ENCODE measurements at regions of chr9 and their contacts with region 1.

Region 1: GRCh38 chr9:34985311-34985899 is 4.1 kb upstream of the DNAJB5 start:
- DNase-seq: no peak
- H3K4me3 ChIP-seq: no peak overlapping the region
- H3K27me3 ChIP-seq: no peaks in the 10 kb centered on the region; the same call in none of the 2 replicates
- CTCF ChIP-seq: peak; percentile 86

Region 2: GRCh38 chr9:34891386-34891785 is 94.0 kb before region 1 on chr9:
- CTCF ChIA-PET with region 1: no interaction called
- POLR2A ChIA-PET with region 1: no interaction called
- DNase-seq: no peak
- H3K4me3 ChIP-seq: no peak overlapping the region
- H3K27me3 ChIP-seq: peaks cover 15% of the 10 kb centered on the region
- CTCF ChIP-seq: no peak

Region 3: GRCh38 chr9:34971146-34971811 is 14.1 kb before region 1 on chr9:
- CTCF ChIA-PET with region 1: interaction called, 13 read pairs
- POLR2A ChIA-PET with region 1: no interaction called
- DNase-seq: no peak
- H3K4me3 ChIP-seq: no peak overlapping the region
- H3K27me3 ChIP-seq: peaks cover 18% of the 10 kb centered on the region
- CTCF ChIP-seq: no peak

Region 4: DNA sequence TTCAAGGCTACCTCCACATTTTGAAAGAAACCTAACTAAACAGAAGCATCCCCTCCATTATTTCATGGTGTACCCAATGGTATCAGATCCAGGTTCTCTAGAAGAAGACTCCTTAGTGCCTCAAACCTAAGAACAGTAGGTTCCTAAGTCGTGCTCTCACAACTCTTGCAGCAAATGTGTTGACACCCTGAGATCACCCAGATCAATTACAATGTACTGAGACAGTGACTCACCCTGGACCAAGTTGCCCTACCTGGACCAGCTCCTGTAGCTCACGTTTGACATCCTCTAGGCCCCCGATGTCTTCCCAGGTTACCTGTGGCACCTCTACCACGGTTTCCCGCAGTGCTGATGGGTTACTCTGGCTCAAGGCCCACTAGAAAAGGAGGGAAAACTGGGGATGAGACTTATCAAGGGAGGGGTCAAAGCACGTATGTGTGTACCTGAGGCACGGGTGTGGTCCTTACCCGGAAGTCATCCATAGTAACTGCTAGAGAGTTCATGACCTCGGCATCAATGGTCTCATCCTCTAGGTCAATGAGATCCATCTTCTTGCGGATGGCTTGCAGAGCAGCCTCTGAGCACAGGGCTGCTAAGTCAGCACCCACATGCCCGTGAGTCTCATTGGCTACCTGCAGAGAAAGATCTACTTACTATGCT is 75.3 kb after region 1 on chr9:
- CTCF ChIA-PET with region 1: no interaction called
- POLR2A ChIA-PET with region 1: no interaction called
- DNase-seq: no peak
- H3K4me3 ChIP-seq: no peak overlapping the region
- H3K27me3 ChIP-seq: no peaks in the 10 kb centered on the region
- CTCF ChIP-seq: no peak

Measured in BJ (cell line).